Heart left ventricle (tissue), 16 donors: ENCODE measurements at regions of chr5 and their contacts with region 1.

Region 1: GRCh38 chr5:42994246-42995151 is 45.6 kb downstream of the ANXA2R start:
- DNase-seq: peak; percentile 88 to 92 (median 89)
- ATAC-seq: peak; percentile 62 to 85 (median 78)
- H3K4me3 ChIP-seq: peak overlapping the region; percentile 6 to 77 (median 68)
- H3K27ac ChIP-seq: peak overlapping the region; percentile 86 to 99 (median 96)
- H3K4me1 ChIP-seq: peaks cover 0 to 31% (median 13%) of the 10 kb centered on the region in 12 donors
- H3K27me3 ChIP-seq: peaks cover 14 to 97% (median 63%) of the 10 kb centered on the region in 9 donors
- CTCF ChIP-seq: peak; percentile 71 to 90 (median 84)
- POLR2A ChIP-seq: no peak

Region 2: GRCh38 chr5:42950440-42951292 is 43.8 kb before region 1 on chr5:
- intact Hi-C with region 1: loop called (anchors 1 to 5 kb)
- DNase-seq: peak in 4 of 5 donors; percentile 69 to 79 (median 75)
- ATAC-seq: peak; percentile 69 to 92 (median 90)
- H3K4me3 ChIP-seq: peak overlapping the region; percentile 8 to 64 (median 57)
- H3K27ac ChIP-seq: peak overlapping the region; percentile 71 to 96 (median 92)
- H3K4me1 ChIP-seq: peaks cover 0 to 43% (median 18%) of the 10 kb centered on the region in 12 donors
- H3K27me3 ChIP-seq: peaks cover 9 to 100% (median 65%) of the 10 kb centered on the region in 9 donors
- CTCF ChIP-seq: peak in 1 of 12 donors; percentile 7
- POLR2A ChIP-seq: no peak

Region 3: GRCh38 chr5:43008369-43009153 is 14.1 kb after region 1 on chr5:
- intact Hi-C with region 1: loop called in 5 of 10 experiments (anchors 1 to 2 kb)
- DNase-seq: peak; percentile 87 to 93 (median 89)
- ATAC-seq: peak; percentile 83 to 90 (median 88)
- H3K4me3 ChIP-seq: peak overlapping the region; percentile 22 to 71 (median 56)
- H3K27ac ChIP-seq: peak overlapping the region; percentile 68 to 98 (median 92)
- H3K4me1 ChIP-seq: peaks cover 0 to 27% (median 4%) of the 10 kb centered on the region in 12 donors
- H3K27me3 ChIP-seq: peaks cover 0 to 75% (median 32%) of the 10 kb centered on the region in 9 donors
- CTCF ChIP-seq: peak in 2 of 12 donors; percentile 5 to 15
- POLR2A ChIP-seq: peak in 1 of 2 donors; percentile 17

Region 4: GRCh38 chr5:43019614-43020293 is 25.3 kb after region 1 on chr5:
- intact Hi-C with region 1: loop called in 2 of 10 experiments (anchors 2 kb)
- DNase-seq: peak in 4 of 5 donors; percentile 64 to 74 (median 70)
- ATAC-seq: peak in 3 of 4 donors; percentile 45 to 51 (median 51)
- H3K4me3 ChIP-seq: peak overlapping the region; percentile 42 to 73 (median 63)
- H3K27ac ChIP-seq: peak overlapping the region; percentile 75 to 99 (median 94)
- H3K4me1 ChIP-seq: peaks cover 0 to 44% (median 9%) of the 10 kb centered on the region in 12 donors
- H3K27me3 ChIP-seq: peaks cover 0 to 94% (median 23%) of the 10 kb centered on the region in 9 donors
- CTCF ChIP-seq: peak; percentile 11 to 55 (median 36)
- POLR2A ChIP-seq: no peak

Region 5: DNA sequence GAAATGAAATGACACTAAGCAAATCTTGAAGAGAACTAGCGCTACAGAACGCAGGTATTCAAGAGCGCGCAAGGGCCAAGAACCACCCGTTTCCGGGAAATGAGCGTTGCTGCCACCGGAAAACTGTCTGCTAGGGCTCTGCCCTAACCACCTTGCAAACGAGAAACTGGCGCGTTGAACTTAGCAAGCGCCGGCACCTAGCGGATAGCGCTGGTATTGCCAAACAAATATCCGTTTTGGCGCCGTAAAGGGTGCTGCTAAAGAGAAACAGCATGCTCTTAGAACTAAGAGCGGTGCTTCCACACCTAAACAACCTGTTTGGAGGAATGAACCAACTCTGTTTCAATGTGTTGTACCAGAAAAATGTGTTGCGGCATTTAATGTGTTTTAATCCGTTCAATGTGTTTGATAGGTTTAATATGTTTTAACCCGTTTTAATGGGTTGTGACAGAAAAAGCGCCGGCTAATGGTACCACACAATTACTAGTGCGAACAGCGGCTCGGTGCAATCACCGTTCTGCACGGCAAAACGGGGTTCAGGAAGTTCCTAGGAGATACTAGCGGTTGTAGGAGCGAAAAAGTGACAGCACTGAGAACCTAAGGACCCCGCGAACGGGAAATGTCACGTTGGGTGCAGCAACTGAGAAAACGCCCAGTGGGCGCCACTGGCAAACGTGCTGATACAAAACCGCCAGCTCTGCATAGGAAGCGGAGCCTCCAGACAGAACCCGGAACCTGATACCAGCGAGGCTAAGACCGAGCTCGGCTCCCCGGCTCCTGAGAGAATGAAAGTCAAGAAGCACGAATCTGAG is 46.0 kb after region 1 on chr5 and contains the start of gene ANXA2R:
- intact Hi-C with region 1: loop called in 9 of 10 experiments (anchors 1 to 5 kb)
- DNase-seq: peak; percentile 87 to 90 (median 89)
- ATAC-seq: peak; percentile 59 to 70 (median 68)
- H3K4me3 ChIP-seq: peak within 1 kb of the TSS; percentile 28 to 77 (median 66)
- H3K27ac ChIP-seq: peak within 1 kb of the TSS; percentile 89 to 99 (median 95)
- H3K4me1 ChIP-seq: peaks cover 0 to 42% (median 7%) of the 10 kb centered on the region in 12 donors
- H3K27me3 ChIP-seq: peaks cover 0 to 80% (median 16%) of the 10 kb centered on the region in 9 donors
- CTCF ChIP-seq: peak; percentile 71 to 86 (median 80)
- POLR2A ChIP-seq: no peak
- total RNA-seq, gene ANXA2R: 0.49 to 2.4 (median 1.4) TPM

Region 6: GRCh38 chr5:43105369-43106289 is 111.1 kb after region 1 on chr5:
- intact Hi-C with region 1: loop called in 1 of 10 experiments (anchors 5 kb)
- DNase-seq: peak; percentile 89 to 93 (median 90)
- ATAC-seq: peak; percentile 90 to 94 (median 90)
- H3K4me3 ChIP-seq: peak overlapping the region in 11 of 12 donors; percentile 21 to 62 (median 50)
- H3K27ac ChIP-seq: peak overlapping the region in 11 of 12 donors; percentile 35 to 77 (median 61)
- H3K4me1 ChIP-seq: peaks cover 0 to 16% (median 4%) of the 10 kb centered on the region in 12 donors
- H3K27me3 ChIP-seq: no peaks in the 10 kb centered on the region
- CTCF ChIP-seq: peak; percentile 98 to 100 (median 99)
- POLR2A ChIP-seq: peak in 1 of 2 donors; percentile 23

Region 7: GRCh38 chr5:43120720-43121564 is 126.4 kb after region 1 on chr5 and contains the start of gene ZNF131:
- intact Hi-C with region 1: loop called in 1 of 10 experiments (anchors 5 kb)
- DNase-seq: peak; percentile 96 to 98 (median 96)
- ATAC-seq: peak; percentile 98 to 99 (median 98)
- H3K4me3 ChIP-seq: peak within 1 kb of the TSS; percentile 25 to 97 (median 82)
- H3K27ac ChIP-seq: peak within 1 kb of the TSS; percentile 86 to 100 (median 98)
- H3K4me1 ChIP-seq: peaks cover 4 to 34% (median 22%) of the 10 kb centered on the region in 12 donors
- H3K27me3 ChIP-seq: no peaks in the 10 kb centered on the region
- CTCF ChIP-seq: no peak
- POLR2A ChIP-seq: peak in 1 of 2 donors; percentile 7
- total RNA-seq, gene ZNF131: 10.9 to 21.6 (median 13.3) TPM